CD4-positive, alpha-beta T cell (primary cell): ENCODE measurements at regions of chr11 and their contacts with region 1.

Region 1: GRCh38 chr11:40118780-40119179 is 1340.7 kb downstream of the LRRC4C start:
- DNase-seq: no peak
- ATAC-seq: no peak
- H3K4me3 ChIP-seq: no peak overlapping the region
- H3K4me3 Mint-ChIP-seq: no peak overlapping the region
- H3K27ac ChIP-seq: no peak overlapping the region
- H3K27ac Mint-ChIP-seq: no peak overlapping the region
- H3K4me1 ChIP-seq: no peaks in the 10 kb centered on the region
- H3K4me1 Mint-ChIP-seq: no peaks in the 10 kb centered on the region
- H3K27me3 ChIP-seq: no peaks in the 10 kb centered on the region
- H3K27me3 Mint-ChIP-seq: no peaks in the 10 kb centered on the region
- CTCF ChIP-seq: no peak

Region 2: GRCh38 chr11:40139066-40139465 is 20.3 kb after region 1 on chr11:
- CTCF ChIA-PET with region 1: no interaction called
- POLR2A ChIA-PET with region 1: no interaction called
- intact Hi-C with region 1: loop called in 1 of 2 experiments (anchors 2 kb)
- DNase-seq: no peak
- ATAC-seq: no peak
- H3K4me3 ChIP-seq: no peak overlapping the region
- H3K4me3 Mint-ChIP-seq: no peak overlapping the region
- H3K27ac ChIP-seq: no peak overlapping the region
- H3K27ac Mint-ChIP-seq: no peak overlapping the region
- H3K4me1 ChIP-seq: no peaks in the 10 kb centered on the region
- H3K4me1 Mint-ChIP-seq: no peaks in the 10 kb centered on the region
- H3K27me3 ChIP-seq: no peaks in the 10 kb centered on the region
- H3K27me3 Mint-ChIP-seq: no peaks in the 10 kb centered on the region
- CTCF ChIP-seq: no peak